ENCODE measurements at regions of chr16 and their contacts with region 1.

Region 1: GRCh38 chr16:57648590-57649442 is 19.3 kb upstream of the ADGRG3 start:
- DNase-seq: peak; percentile 85 to 93
- ATAC-seq: peak; percentile 56 to 78
- H3K4me3 ChIP-seq: no peak overlapping the region
- H3K27ac ChIP-seq: peak overlapping the region in 1 of 2 experiments; percentile 89; a peak in 3 of 6 replicates
- H3K4me1 ChIP-seq: peaks cover 41% of the 10 kb centered on the region
- CTCF ChIP-seq: peak; percentile 100
- EP300 ChIP-seq: no peak
- POLR2A ChIP-seq: no peak
- RAD21 ChIP-seq: peak; percentile 100

Region 2: GRCh38 chr16:57475711-57476339 is 173.0 kb before region 1 on chr16:
- CTCF ChIA-PET with region 1: no interaction called
- POLR2A ChIA-PET with region 1: no interaction called
- DNase-seq: peak; percentile 77 to 82
- ATAC-seq: peak; percentile 44 to 69
- H3K4me3 ChIP-seq: peak overlapping the region; percentile 21; the same call in 1 of the 3 replicates
- H3K27ac ChIP-seq: peak overlapping the region; percentile 96 to 98
- H3K4me1 ChIP-seq: peaks cover 97% of the 10 kb centered on the region
- CTCF ChIP-seq: peak; percentile 58
- EP300 ChIP-seq: no peak
- POLR2A ChIP-seq: no peak
- RAD21 ChIP-seq: peak in 1 of 2 experiments; percentile 59; a peak in 4 of 5 replicates

Region 3: GRCh38 chr16:57591086-57591869 is 57.5 kb before region 1 on chr16:
- CTCF ChIA-PET with region 1: interaction called, 785 read pairs
- POLR2A ChIA-PET with region 1: no interaction called
- DNase-seq: peak; percentile 82 to 90
- ATAC-seq: peak; percentile 94 to 97
- H3K4me3 ChIP-seq: no peak overlapping the region
- H3K27ac ChIP-seq: peak overlapping the region; percentile 55 to 78
- H3K4me1 ChIP-seq: peaks cover 18% of the 10 kb centered on the region
- CTCF ChIP-seq: peak; percentile 95
- EP300 ChIP-seq: no peak
- POLR2A ChIP-seq: no peak
- RAD21 ChIP-seq: peak; percentile 95 to 96

Region 4: GRCh38 chr16:57628008-57628781 is 20.6 kb before region 1 on chr16 and contains the start of gene ADGRG1:
- CTCF ChIA-PET with region 1: interaction called, 184 read pairs
- POLR2A ChIA-PET with region 1: interaction called, 7 read pairs
- DNase-seq: peak; percentile 93 to 95
- ATAC-seq: peak; percentile 80 to 85
- H3K4me3 ChIP-seq: peak within 1 kb of the TSS; percentile 44
- H3K27ac ChIP-seq: peak within 1 kb of the TSS; percentile 91 to 98
- H3K4me1 ChIP-seq: peaks cover 94% of the 10 kb centered on the region
- CTCF ChIP-seq: no peak; the same call in 2 of the 3 replicates
- EP300 ChIP-seq: peak; percentile 17 to 28; a peak in 2 of 5 replicates
- POLR2A ChIP-seq: peak; percentile 54
- RAD21 ChIP-seq: peak; percentile 11 to 23; a peak in 1 of 5 replicates
- polyA plus RNA-seq, gene ADGRG1: 28.3 and 37.7 TPM in 2 replicates

Region 5: GRCh38 chr16:57667526-57668258 is 18.9 kb after region 1 on chr16:
- CTCF ChIA-PET with region 1: interaction called, 42 read pairs
- POLR2A ChIA-PET with region 1: no interaction called
- DNase-seq: peak in 1 of 2 experiments; percentile 54
- ATAC-seq: peak; percentile 35 to 36; a peak in 4 of 6 replicates
- H3K4me3 ChIP-seq: no peak overlapping the region
- H3K27ac ChIP-seq: peak overlapping the region; percentile 61 to 71
- H3K4me1 ChIP-seq: peaks cover 16% of the 10 kb centered on the region
- CTCF ChIP-seq: no peak
- EP300 ChIP-seq: peak in 1 of 2 experiments; percentile 18; a peak in 1 of 5 replicates
- POLR2A ChIP-seq: no peak
- RAD21 ChIP-seq: no peak

Region 6: GRCh38 chr16:57700781-57701551 is 52.1 kb after region 1 on chr16:
- CTCF ChIA-PET with region 1: interaction called, 19 read pairs
- POLR2A ChIA-PET with region 1: no interaction called
- DNase-seq: no peak
- ATAC-seq: no peak
- H3K4me3 ChIP-seq: no peak overlapping the region
- H3K27ac ChIP-seq: no peak overlapping the region
- H3K4me1 ChIP-seq: peaks cover 13% of the 10 kb centered on the region
- CTCF ChIP-seq: no peak
- EP300 ChIP-seq: no peak
- POLR2A ChIP-seq: no peak
- RAD21 ChIP-seq: no peak

Region 7: GRCh38 chr16:57734925-57735754 is 86.3 kb after region 1 on chr16:
- CTCF ChIA-PET with region 1: interaction called, 20 read pairs
- POLR2A ChIA-PET with region 1: no interaction called
- DNase-seq: peak; percentile 99 to 100
- ATAC-seq: peak; percentile 88 to 95
- H3K4me3 ChIP-seq: peak overlapping the region; percentile 72
- H3K27ac ChIP-seq: peak overlapping the region; percentile 92 to 93
- H3K4me1 ChIP-seq: peaks cover 12% of the 10 kb centered on the region
- CTCF ChIP-seq: no peak
- EP300 ChIP-seq: no peak
- POLR2A ChIP-seq: 0 out of 2 replicates have a peak, but pooled peaks have one; percentile 8
- RAD21 ChIP-seq: no peak

Region 8: GRCh38 chr16:57955572-57956188 is 306.9 kb after region 1 on chr16:
- CTCF ChIA-PET with region 1: no interaction called
- POLR2A ChIA-PET with region 1: no interaction called
- DNase-seq: peak in 1 of 2 experiments; percentile 40
- ATAC-seq: peak; percentile 72 to 76; a peak in 5 of 6 replicates
- H3K4me3 ChIP-seq: no peak overlapping the region
- H3K27ac ChIP-seq: peak overlapping the region in 1 of 2 experiments; percentile 35; a peak in 2 of 6 replicates
- H3K4me1 ChIP-seq: 0 out of 3 replicates have a peak, but pooled peaks cover 3% of the 10 kb centered on the region
- CTCF ChIP-seq: no peak
- EP300 ChIP-seq: no peak
- POLR2A ChIP-seq: no peak
- RAD21 ChIP-seq: no peak

Measured in A549 (cell line).